ENCODE measurements at regions of chr1 and their contacts with region 1.

Region 1: GRCh38 chr1:111139956-111140679 is at the starts of genes CEPT1 and DRAM2:
- DNase-seq: peak; percentile 88
- ATAC-seq: peak; percentile 80
- H3K4me3 ChIP-seq: peak within 1 kb of the TSS; percentile 82 to 90 (median 84)
- H3K27ac ChIP-seq: peak within 1 kb of the TSS; percentile 96
- H3K4me1 ChIP-seq: peaks cover 45% of the 10 kb centered on the region
- H3K27me3 ChIP-seq: no peaks in the 10 kb centered on the region
- CTCF ChIP-seq: peak; percentile 33
- EP300 ChIP-seq: no peak
- POLR2A ChIP-seq: peak; percentile 72 to 77
- RAD21 ChIP-seq: 0 out of 2 replicates have a peak, but pooled peaks have one; percentile 9
- total RNA-seq, gene CEPT1: 33.6 and 48.2 TPM in 2 replicates
- total RNA-seq, gene DRAM2: 22.9 and 33.2 TPM in 2 replicates

Region 2: DNA sequence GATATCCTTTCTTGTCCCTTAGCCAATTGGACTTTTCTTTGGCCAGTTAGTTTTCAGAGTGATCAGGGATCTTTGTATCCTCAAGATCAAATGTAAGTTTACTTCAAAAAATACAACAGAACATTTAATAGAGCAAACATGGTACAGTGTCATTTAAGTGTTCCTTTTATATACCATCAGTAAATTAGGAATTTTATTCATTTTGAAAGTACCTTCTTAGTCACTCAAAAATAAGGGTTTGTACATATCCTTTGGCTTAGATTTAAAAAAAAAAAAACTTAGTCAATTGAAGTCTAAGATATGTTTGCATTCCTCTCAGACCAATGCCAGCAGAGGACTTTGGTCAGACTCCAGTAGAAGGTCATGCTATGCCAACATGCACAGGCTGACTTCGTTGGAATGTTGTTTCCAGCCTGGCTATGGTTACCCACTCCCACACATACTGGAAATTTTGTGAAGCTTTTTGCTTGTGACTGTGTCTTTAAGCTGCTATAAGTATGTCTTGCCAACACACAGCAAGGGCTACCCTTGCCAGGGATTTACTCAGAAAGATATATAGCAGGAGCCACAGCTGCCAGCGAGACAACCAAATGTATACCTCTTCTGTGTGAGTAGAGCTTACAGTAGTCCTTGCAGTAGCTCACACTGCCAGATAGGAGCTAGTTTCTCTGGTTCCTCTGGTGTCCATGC is 94.9 kb before region 1 on chr1:
- CTCF ChIA-PET with region 1: no interaction called
- POLR2A ChIA-PET with region 1: interaction called, 7 read pairs
- in situ Hi-C with region 1: no loop called
- intact Hi-C with region 1: loop called (anchors 1 kb)
- DNase-seq: peak; percentile 93
- ATAC-seq: peak; percentile 100
- H3K4me3 ChIP-seq: peak overlapping the region in 2 of 3 experiments; percentile 17 to 50; a peak in 2 of 6 replicates
- H3K27ac ChIP-seq: peak overlapping the region; percentile 99
- H3K4me1 ChIP-seq: peaks cover 34% of the 10 kb centered on the region
- H3K27me3 ChIP-seq: no peaks in the 10 kb centered on the region; a peak in 1 of 5 replicates
- CTCF ChIP-seq: no peak
- EP300 ChIP-seq: peak; percentile 61 to 69; a peak in 2 of 4 replicates
- POLR2A ChIP-seq: peak in 1 of 2 experiments; percentile 42; a peak in 1 of 4 replicates
- RAD21 ChIP-seq: no peak

Region 3: DNA sequence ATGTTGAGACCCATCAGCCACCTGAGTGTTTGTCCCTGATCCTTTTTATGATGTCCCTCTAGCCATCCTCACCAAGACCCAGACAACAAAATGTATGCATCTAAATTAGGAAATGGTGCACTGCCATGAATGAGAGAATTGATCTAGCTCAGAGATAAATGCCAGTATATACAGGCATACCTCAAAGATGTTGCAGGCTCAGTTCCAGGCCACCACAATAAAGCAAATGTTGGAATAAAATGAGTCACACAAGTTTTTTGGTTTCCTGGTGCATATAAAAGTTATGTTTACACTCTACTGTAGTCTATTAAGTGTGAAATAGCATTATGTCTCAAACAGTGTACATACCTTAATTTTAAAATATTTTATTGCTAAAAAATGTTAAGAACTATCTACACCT is 214.5 kb after region 1 on chr1:
- CTCF ChIA-PET with region 1: no interaction called
- POLR2A ChIA-PET with region 1: no interaction called
- in situ Hi-C with region 1: no loop called
- intact Hi-C with region 1: no loop called
- DNase-seq: no peak
- ATAC-seq: no peak
- H3K4me3 ChIP-seq: no peak overlapping the region
- H3K27ac ChIP-seq: no peak overlapping the region
- H3K4me1 ChIP-seq: no peaks in the 10 kb centered on the region
- H3K27me3 ChIP-seq: no peaks in the 10 kb centered on the region; a peak in 1 of 5 replicates
- CTCF ChIP-seq: no peak
- EP300 ChIP-seq: no peak
- POLR2A ChIP-seq: no peak
- RAD21 ChIP-seq: no peak